HEK293T (cell line): ENCODE measurements at regions of chr12 and their contacts with region 1.

Region 1: DNA sequence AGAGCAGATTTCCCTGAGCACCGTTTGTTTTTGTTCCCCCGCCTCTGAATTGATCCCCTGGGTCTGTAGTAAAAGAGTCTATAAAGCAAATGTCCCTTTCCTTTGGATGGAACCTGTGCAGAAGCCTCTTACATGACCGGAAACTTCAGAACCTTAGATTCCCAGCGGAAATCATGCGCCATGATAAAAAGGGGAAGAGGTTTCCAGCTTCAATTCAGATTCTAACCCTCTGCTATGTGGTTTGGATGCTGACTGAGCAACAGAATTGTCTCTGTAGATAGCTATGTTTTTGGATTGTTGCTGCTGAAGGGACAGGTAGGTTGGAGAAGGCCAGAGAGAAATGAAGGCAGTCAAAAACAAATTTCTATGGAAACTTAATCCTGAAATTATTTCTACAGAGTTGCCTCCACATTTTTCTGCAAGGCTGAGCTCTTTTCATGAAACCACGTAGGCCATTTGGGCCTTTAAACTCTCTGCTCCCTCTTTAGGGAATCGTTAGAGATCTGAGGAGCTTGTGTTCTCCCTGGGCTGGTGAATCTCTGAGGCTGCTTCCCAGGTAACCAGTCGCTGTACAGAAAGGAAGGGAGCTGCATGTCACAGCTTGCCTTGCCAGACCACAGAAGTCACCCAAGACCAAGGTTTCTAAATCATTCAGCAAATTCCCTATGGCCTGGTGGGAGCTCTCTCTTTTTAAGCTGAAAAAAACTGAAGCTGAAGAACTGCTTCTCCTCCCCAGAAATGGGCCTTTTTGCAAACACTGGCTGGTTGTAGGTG is 28.7 kb upstream of the OR10P1 start:
- DNase-seq: no peak

Region 2: GRCh38 chr12:55582066-55582465 is 25.9 kb before region 1 on chr12:
- CTCF ChIA-PET with region 1: no interaction called
- POLR2A ChIA-PET with region 1: no interaction called
- DNase-seq: no peak

Region 3: DNA sequence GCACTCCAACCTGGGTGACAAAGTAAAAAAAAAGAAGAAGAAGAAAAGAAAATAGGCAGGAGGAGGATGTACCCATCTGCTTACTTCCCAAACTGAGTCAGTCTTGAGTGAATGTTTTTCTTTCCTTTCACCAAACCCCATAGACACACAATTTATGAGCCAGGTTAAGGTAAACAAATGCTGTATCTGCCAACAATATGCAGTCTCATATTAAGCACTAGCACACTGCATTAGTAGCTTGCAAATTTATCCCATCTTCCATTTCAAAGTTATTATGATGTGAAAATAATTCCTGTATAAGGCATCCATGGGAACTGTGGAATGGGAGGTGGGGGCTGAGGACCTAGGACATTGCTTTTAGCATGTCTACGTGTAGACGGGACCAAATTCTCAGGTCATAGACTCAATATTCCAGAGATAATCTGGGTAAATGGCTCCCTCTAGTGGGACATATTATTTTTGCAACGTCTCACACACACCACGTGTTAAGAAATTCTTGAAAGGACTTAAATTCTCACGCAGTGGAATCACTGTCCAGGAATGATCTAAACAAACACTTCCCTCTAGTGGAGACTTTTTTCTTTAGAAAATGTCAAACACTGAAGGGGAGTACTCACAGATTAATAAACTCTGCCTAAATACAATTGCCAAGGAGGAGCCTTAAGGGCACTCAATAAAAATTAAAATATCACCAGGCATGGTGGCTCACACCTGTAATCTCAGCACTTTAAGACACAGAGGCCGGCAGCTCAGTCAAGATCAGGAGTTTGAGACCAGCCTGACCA is 11.5 kb after region 1 on chr12:
- CTCF ChIA-PET with region 1: interaction called, 11 read pairs
- POLR2A ChIA-PET with region 1: no interaction called
- DNase-seq: peak; percentile 64